ENCODE measurements at regions of chr3 and their contacts with region 1.

Region 1: DNA sequence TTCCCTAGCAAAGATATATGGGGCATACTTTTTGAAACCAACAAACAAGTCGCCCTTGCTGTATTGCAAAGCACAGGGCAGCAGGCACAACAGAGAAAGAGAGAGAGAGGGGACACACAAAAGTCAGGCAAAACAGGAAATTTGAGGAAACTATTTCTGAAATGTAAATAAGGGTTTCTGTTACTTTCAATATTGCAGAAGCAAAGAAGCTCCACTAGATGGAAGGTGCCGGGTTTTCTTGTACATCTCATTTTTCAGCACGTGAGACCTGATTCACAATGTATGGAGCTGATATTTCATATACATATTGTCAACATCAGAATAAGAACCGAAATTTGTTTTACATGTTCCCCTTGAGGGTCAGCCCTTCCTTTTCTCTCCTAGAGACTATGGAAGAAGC is 127.4 kb downstream of the FOXP1 start:
- H3K4me3 Mint-ChIP-seq: peak overlapping the region; percentile 62
- H3K27ac Mint-ChIP-seq: peak overlapping the region; percentile 74
- H3K4me1 Mint-ChIP-seq: peaks cover 53% of the 10 kb centered on the region
- H3K27me3 Mint-ChIP-seq: no peaks in the 10 kb centered on the region

Region 2: DNA sequence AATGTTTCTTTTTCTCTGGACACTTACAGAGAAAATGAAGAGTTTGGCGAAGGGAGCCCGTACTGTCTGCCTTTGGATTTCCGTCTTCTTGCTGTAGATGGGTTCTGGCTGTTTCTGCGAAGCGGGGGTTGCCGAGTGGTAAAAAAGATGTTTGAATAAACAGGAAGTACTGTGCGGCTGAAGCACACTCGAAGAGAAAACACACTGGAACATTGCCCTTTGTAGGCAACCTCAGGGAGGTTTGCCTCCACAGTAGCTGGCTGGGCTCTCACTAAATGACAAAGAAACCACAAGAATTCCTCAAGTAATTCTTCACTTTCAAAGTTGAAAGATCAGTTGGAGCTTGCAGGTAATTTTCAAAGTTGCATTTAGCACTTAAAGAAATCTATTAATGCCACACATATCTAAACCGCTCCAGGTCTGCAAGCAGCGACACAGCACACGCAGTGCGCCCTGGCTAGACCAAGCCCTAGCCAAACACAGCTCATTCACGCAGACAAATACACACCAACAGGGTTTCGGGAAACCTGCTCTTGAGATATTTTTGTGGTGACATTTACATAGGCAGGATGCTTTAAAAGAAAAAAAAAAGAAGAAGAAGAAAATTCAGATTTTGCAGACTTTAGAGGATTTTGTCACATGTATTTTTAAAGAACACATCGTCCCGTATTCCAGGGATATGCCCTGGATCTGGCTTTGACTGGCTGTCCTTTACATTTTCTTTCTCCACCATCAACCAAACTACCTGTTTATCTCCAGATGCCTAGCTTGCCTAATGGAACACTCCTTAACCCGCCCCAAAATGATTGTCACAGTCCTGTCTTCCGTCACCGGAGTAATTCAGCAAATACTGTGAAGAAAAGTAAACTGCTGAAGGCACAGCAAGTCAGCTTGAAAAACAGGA is 325.4 kb before region 1 on chr3:
- intact Hi-C with region 1: no loop called
- H3K4me3 Mint-ChIP-seq: peak overlapping the region; percentile 76
- H3K27ac Mint-ChIP-seq: peak overlapping the region; percentile 80
- H3K4me1 Mint-ChIP-seq: peaks cover 34% of the 10 kb centered on the region
- H3K27me3 Mint-ChIP-seq: no peaks in the 10 kb centered on the region

Region 3: GRCh38 chr3:71487418-71487817 is 31.3 kb after region 1 on chr3:
- intact Hi-C with region 1: no loop called
- H3K4me3 Mint-ChIP-seq: no peak overlapping the region
- H3K27ac Mint-ChIP-seq: no peak overlapping the region
- H3K4me1 Mint-ChIP-seq: peaks cover 6% of the 10 kb centered on the region
- H3K27me3 Mint-ChIP-seq: no peaks in the 10 kb centered on the region

Region 4: DNA sequence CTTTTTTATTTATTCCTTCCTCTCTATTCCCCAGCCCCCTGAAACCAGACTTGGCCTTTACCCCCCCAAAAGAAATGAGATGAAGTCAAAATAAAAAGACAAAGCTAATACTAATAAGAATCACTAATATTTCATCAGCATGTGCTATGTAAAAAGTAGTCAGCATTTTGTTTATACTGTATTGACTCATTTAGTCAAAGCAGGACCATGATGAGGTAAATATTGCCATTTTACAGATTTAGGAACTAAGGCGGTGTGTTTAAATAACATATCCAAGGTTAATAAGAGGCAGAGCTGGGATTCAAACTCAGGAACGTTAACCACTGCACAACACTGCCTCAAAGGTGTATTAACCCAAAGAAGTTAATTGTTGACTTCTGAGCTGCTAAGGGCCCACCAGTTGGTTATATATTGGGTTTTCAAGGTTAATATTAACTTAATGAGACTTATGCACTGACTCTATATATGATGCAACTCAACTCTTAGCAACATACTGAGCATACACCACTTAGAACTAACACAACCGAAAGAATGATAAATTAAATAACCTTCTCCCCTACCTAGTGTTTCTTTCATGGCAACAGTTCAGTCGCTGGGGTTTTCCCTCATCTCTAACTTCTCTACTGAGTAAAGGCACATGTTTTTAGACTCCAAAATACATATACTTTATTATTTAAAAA is 92.7 kb after region 1 on chr3:
- intact Hi-C with region 1: loop called (anchors 5 kb)
- H3K4me3 Mint-ChIP-seq: no peak overlapping the region
- H3K27ac Mint-ChIP-seq: peak overlapping the region; percentile 66
- H3K4me1 Mint-ChIP-seq: peaks cover 42% of the 10 kb centered on the region
- H3K27me3 Mint-ChIP-seq: no peaks in the 10 kb centered on the region

Measured in dendritic cell treated with granulocyte-macrophage colony-stimulating factor and Interleukin-4, amounts not matched to agents 40 ng/mL and 50 ng/mL, for 4 days (primary cell).